Activated CD8-positive, alpha-beta T cell treated with anti-CD3 and anti-CD28 coated beads, Interleukin-2, amount 10 ng/mL, durations not matched to agents 7 days and 5 days (primary cell): ENCODE measurements at regions of chr19 and their contacts with region 1.

Region 1: GRCh38 chr19:47428177-47428894 is 9.0 kb upstream of the MEIS3 start:
- DNase-seq: peak; percentile 96
- ATAC-seq: peak; percentile 88
- H3K4me3 Mint-ChIP-seq: no peak overlapping the region
- H3K27ac Mint-ChIP-seq: no peak overlapping the region
- H3K4me1 Mint-ChIP-seq: peaks cover 31% of the 10 kb centered on the region
- H3K27me3 Mint-ChIP-seq: peaks cover 32% of the 10 kb centered on the region

Region 2: GRCh38 chr19:47296036-47296435 is 132.3 kb before region 1 on chr19:
- CTCF ChIA-PET with region 1: interaction called, 38 read pairs
- POLR2A ChIA-PET with region 1: no interaction called
- DNase-seq: peak; percentile 89
- ATAC-seq: peak; percentile 95
- H3K4me3 Mint-ChIP-seq: no peak overlapping the region
- H3K27ac Mint-ChIP-seq: no peak overlapping the region
- H3K4me1 Mint-ChIP-seq: peaks cover 13% of the 10 kb centered on the region
- H3K27me3 Mint-ChIP-seq: no peaks in the 10 kb centered on the region

Region 3: DNA sequence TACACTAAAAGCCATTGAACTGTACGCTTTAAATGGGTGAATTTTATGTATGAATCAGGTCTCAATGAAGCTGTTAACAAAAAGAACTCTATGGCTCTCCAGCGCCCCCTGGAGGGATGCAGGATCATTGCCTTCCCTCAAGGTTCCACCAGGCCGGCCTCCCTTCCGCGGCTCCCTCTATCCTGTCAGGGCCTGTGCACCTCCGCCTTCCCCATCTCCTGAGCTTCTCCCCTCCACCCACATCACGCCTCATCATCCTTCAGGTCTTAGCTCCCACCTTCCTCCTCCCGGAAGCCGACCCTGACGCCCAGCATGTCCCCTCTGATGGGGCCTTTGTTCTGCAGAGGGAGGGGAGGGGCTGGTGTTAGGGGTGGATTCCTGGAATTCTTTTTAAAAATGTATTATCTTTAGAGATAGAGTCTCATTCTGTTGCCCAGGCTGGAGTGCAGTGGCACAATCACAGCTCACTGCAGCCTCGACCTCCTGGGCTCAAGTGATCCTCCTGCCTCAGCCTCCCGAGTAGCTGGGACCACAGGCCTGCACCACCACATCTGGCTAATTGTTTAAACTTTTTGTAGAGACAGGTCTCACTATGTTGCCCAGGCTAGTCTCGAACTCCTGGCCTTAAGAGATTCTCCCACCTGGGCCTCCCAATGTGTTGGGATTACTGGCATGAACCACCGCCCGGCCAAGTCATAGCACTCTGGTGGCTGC is 36.7 kb before region 1 on chr19:
- CTCF ChIA-PET with region 1: interaction called, 19 read pairs
- POLR2A ChIA-PET with region 1: no interaction called
- DNase-seq: peak; percentile 88
- ATAC-seq: peak; percentile 93
- H3K4me3 Mint-ChIP-seq: no peak overlapping the region
- H3K27ac Mint-ChIP-seq: no peak overlapping the region
- H3K4me1 Mint-ChIP-seq: peaks cover 4% of the 10 kb centered on the region
- H3K27me3 Mint-ChIP-seq: peaks cover 8% of the 10 kb centered on the region

Region 4: GRCh38 chr19:47483800-47484690 is 55.7 kb after region 1 on chr19 and contains the start of gene KPTN:
- CTCF ChIA-PET with region 1: interaction called, 14 read pairs
- POLR2A ChIA-PET with region 1: interaction called, 4 read pairs
- DNase-seq: peak; percentile 93
- ATAC-seq: peak; percentile 91
- H3K4me3 Mint-ChIP-seq: peak within 1 kb of the TSS; percentile 97
- H3K27ac Mint-ChIP-seq: peak within 1 kb of the TSS; percentile 100
- H3K4me1 Mint-ChIP-seq: peaks cover 42% of the 10 kb centered on the region
- H3K27me3 Mint-ChIP-seq: no peaks in the 10 kb centered on the region
- total RNA-seq, gene KPTN: 12.6 to 13.0 TPM

Region 5: GRCh38 chr19:47514869-47515588 is 86.7 kb after region 1 on chr19 and contains the start of gene NAPA:
- CTCF ChIA-PET with region 1: interaction called, 16 read pairs
- POLR2A ChIA-PET with region 1: interaction called, 5 read pairs
- DNase-seq: peak; percentile 100
- ATAC-seq: peak; percentile 96
- H3K4me3 Mint-ChIP-seq: peak within 1 kb of the TSS; percentile 94
- H3K27ac Mint-ChIP-seq: peak within 1 kb of the TSS; percentile 96
- H3K4me1 Mint-ChIP-seq: peaks cover 81% of the 10 kb centered on the region
- H3K27me3 Mint-ChIP-seq: peaks cover 11% of the 10 kb centered on the region
- total RNA-seq, gene NAPA: 90.0 to 103 TPM

Region 6: DNA sequence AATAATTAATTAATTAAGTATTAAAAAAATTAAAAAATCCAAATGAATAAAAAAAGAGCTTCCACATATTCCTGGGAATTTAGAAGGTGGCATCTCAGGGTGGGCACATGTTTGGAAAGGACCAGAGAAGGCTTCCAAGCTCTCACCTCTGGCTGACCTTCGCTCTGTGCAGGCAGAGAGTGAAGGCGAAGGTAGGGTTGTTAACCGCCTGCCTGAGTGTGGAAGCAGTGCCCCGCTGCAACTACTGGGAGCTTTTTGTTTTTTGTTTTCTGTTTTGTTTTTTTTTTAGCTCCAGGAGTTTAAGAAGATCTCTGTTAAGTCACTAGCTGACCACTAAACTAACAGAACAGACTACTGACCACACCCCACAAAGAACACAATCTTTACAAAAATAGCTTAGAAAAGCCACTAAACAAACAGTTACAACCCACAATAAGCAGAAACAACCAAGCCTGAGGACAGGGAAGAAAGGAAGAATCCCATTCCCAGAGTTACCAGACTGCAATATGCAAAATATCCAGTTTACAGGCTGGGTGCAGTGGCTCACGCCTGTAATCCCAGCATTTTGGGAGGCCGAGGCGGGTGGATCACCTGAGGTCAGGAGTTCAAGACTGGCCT is 133.2 kb after region 1 on chr19:
- CTCF ChIA-PET with region 1: no interaction called
- POLR2A ChIA-PET with region 1: no interaction called
- DNase-seq: no peak
- ATAC-seq: no peak
- H3K4me3 Mint-ChIP-seq: no peak overlapping the region
- H3K27ac Mint-ChIP-seq: no peak overlapping the region
- H3K4me1 Mint-ChIP-seq: peaks cover 10% of the 10 kb centered on the region
- H3K27me3 Mint-ChIP-seq: peaks cover 17% of the 10 kb centered on the region

Region 7: DNA sequence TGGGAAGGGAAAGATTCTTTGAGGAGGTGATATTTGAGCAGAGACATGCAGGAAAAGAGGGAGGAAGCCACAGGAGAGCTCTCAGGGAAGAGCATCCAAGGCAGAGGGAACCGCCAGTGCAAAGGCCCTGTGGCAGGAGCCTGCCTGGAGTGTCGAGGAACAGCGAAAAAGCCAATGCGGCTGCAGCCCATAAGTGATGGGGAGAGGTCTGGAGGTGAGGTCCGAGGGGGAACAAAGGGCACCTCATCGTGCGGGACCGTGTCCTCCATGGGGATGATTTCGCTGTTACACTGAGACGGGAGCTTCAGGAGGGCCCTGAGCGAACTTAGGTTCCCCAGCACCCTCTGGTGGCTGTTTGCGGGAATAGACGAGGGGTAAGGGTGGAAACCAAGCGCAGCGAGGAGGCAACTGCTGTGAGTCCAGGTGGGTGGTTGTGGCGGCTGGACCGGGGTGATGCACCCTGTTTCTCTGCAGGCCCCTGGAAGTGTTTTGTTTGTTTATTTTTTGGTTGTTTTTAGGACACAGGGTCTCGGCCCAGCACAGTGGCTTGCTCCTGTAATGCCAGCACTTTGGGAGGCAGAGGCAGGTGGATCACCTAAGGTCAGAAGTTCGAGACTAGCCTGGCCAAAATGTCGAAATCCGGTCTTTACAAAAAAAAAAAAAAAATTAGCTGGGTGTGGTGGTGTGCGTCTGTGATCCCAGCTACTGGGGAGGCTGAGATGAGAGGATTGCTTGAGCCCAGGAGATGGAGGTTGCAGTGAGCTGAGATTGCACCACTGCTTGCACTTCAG is 279.0 kb after region 1 on chr19:
- CTCF ChIA-PET with region 1: interaction called, 29 read pairs
- POLR2A ChIA-PET with region 1: no interaction called
- DNase-seq: peak; percentile 87
- ATAC-seq: peak; percentile 96
- H3K4me3 Mint-ChIP-seq: no peak overlapping the region
- H3K27ac Mint-ChIP-seq: no peak overlapping the region
- H3K4me1 Mint-ChIP-seq: peaks cover 5% of the 10 kb centered on the region
- H3K27me3 Mint-ChIP-seq: peaks cover 5% of the 10 kb centered on the region